Pancreas (tissue), 10 donors: ENCODE measurements at regions of chr6 and their contacts with region 1.

Region 1: DNA sequence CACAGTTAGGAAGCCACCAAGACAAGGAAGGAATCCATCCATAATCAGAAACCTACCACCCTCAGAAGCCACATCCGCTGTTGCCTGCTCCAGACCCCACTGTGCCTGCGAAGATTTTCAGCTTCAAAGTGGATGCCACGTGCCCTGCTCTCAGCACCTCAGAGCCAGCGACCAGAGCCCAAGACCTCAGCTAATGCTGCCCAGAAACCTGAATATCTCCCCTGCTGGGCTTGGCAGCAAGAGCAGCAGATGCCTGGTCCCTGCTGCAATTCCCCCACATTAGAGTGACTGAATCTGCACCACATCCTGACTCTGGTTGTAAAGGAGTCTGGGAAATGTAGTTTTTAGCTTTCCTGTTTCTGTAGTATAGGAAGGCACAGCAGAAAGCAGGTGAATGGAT is 10.7 kb upstream of the ULBP3 start:
- DNase-seq: no peak
- ATAC-seq: no peak
- H3K4me3 ChIP-seq: no peak overlapping the region
- H3K27ac ChIP-seq: no peak overlapping the region
- H3K4me1 ChIP-seq: no peaks in the 10 kb centered on the region
- H3K27me3 ChIP-seq: no peaks in the 10 kb centered on the region
- CTCF ChIP-seq: no peak

Region 2: GRCh38 chr6:150334790-150335783 is 255.5 kb after region 1 on chr6:
- intact Hi-C with region 1: loop called in 1 of 3 experiments (anchors 5 kb)
- DNase-seq: peak in 3 of 6 donors; percentile 21 to 59 (median 24)
- ATAC-seq: peak; percentile 50 to 82 (median 74)
- H3K4me3 ChIP-seq: no peak overlapping the region
- H3K27ac ChIP-seq: no peak overlapping the region
- H3K4me1 ChIP-seq: no peaks in the 10 kb centered on the region
- H3K27me3 ChIP-seq: no peaks in the 10 kb centered on the region
- CTCF ChIP-seq: peak; percentile 58 to 74 (median 64)

Region 3: DNA sequence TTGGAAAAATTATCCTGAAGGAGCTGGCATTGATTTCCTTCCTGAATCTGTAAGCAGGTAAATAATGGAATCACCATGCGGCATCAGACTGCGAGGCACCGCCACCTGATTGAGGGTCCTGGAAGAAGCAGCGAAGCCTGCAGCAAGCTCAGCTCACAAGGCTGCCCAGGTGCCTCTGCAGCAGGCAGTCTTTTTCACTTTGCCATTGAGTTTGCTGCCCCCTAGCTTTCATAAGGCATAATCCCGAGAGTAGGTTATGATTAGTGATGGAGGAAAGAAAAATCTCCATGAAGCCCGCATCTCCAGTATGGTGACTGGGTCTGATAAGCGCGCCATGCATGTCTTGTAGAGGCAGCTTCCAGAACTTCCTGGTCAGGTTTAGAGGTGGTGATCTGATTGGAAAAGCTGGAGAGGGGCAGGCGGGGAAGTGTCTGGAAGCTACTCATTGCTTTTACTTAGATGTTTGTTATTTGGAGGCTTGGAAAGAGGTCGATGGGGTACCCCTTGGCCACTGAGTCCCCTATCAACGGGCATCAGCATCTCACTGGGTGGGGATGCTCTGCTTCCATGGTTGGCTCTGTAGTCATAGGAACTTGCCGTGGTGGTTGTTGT is 315.9 kb after region 1 on chr6:
- intact Hi-C with region 1: loop called in 1 of 3 experiments (anchors 5 kb)
- DNase-seq: peak in 4 of 6 donors; percentile 34 to 53 (median 36)
- ATAC-seq: peak; percentile 60 to 93 (median 91)
- H3K4me3 ChIP-seq: no peak overlapping the region
- H3K27ac ChIP-seq: no peak overlapping the region
- H3K4me1 ChIP-seq: peaks cover 0 to 3% (median 0%) of the 10 kb centered on the region in 3 donors
- H3K27me3 ChIP-seq: no peaks in the 10 kb centered on the region
- CTCF ChIP-seq: peak; percentile 33 to 61 (median 52)